GM18951 (cell line): ENCODE measurements at regions of chr9 and their contacts with region 1.

Region 1: GRCh38 chr9:130672466-130672865 is 8.1 kb downstream of the PRDM12 start:
- POLR2A ChIP-seq: no peak

Region 2: GRCh38 chr9:130461218-130461630 is 211.2 kb before region 1 on chr9:
- in situ Hi-C with region 1: loop called (anchors 10 kb)
- POLR2A ChIP-seq: no peak